PC-3 (cell line): ENCODE measurements at regions of chr2 and their contacts with region 1.

Region 1: GRCh38 chr2:172408143-172408766 is 19.1 kb upstream of the ITGA6 start:
- DNase-seq: peak; percentile 29
- ATAC-seq: peak; percentile 39
- H3K4me3 ChIP-seq: no peak overlapping the region
- H3K27ac ChIP-seq: no peak overlapping the region
- H3K4me1 ChIP-seq: peaks cover 19% of the 10 kb centered on the region; the same call in 1 of the 2 replicates
- H3K27me3 ChIP-seq: no peaks in the 10 kb centered on the region
- CTCF ChIP-seq: no peak

Region 2: DNA sequence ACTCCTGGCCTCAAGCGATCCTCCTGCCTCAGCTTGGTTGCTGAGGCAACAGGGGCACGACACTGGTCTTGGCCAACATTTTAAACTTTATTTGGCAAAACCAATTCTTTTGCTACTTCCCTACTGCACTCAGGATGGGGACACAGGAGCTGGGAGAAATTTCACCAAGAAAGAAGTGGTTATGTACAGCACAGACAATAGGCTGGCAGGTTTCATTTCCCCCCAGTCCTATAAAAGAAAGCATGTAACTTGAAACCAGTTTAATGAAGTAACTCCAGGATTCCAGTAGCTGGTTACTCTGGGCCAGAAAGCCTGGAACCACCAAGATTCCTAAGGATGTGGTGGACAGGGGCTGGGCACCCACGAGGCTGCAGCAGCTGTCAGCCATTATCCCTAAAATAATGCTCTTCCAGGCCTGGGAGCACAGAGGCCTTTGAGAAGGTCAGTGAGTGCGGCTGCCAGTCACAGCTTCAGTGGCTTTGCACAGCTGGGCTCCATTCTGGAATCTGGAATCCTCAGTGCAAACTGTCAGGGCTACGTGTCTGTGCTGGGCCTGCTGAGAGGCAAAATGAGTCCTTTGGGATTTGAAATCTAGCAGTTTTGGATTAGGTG is 123.1 kb before region 1 on chr2:
- CTCF ChIA-PET with region 1: no interaction called
- POLR2A ChIA-PET with region 1: no interaction called
- intact Hi-C with region 1: no loop called
- DNase-seq: peak; percentile 48
- ATAC-seq: peak; percentile 54
- H3K4me3 ChIP-seq: no peak overlapping the region
- H3K27ac ChIP-seq: no peak overlapping the region
- H3K4me1 ChIP-seq: peaks cover 44% of the 10 kb centered on the region
- H3K27me3 ChIP-seq: no peaks in the 10 kb centered on the region
- CTCF ChIP-seq: no peak

Region 3: GRCh38 chr2:172339371-172340010 is 68.8 kb before region 1 on chr2:
- CTCF ChIA-PET with region 1: no interaction called
- POLR2A ChIA-PET with region 1: no interaction called
- intact Hi-C with region 1: loop called (anchors 2 kb)
- DNase-seq: no peak
- ATAC-seq: no peak
- H3K4me3 ChIP-seq: no peak overlapping the region
- H3K27ac ChIP-seq: no peak overlapping the region
- H3K4me1 ChIP-seq: peaks cover 31% of the 10 kb centered on the region
- H3K27me3 ChIP-seq: no peaks in the 10 kb centered on the region
- CTCF ChIP-seq: no peak